ENCODE measurements at regions of chr19 and their contacts with region 1.

Region 1: GRCh38 chr19:39846176-39846677 is at the start of gene FBL:
- DNase-seq: peak; percentile 99
- CTCF ChIP-seq: no peak

Region 2: DNA sequence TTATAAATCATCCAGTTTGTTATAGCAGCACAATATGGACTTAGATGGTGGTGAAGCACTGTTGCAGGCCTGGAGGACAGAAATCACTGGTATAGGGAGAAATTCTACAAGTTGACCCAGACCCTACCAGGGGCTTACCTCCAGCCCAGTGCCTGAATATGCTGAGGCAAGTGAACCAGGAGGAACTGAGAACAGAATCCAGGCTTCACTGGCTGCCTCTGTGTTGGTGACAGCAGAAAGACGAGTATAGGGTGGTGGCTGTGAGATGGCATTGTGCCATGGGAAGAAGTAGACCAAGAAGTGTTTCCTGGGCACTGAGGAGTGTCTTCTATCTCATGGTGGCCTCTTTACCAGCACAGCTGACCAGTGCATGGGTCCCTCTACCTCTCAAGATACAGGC is 290.3 kb before region 1 on chr19:
- CTCF ChIA-PET with region 1: interaction called, 33 read pairs
- POLR2A ChIA-PET with region 1: no interaction called
- DNase-seq: no peak
- CTCF ChIP-seq: no peak

Region 3: DNA sequence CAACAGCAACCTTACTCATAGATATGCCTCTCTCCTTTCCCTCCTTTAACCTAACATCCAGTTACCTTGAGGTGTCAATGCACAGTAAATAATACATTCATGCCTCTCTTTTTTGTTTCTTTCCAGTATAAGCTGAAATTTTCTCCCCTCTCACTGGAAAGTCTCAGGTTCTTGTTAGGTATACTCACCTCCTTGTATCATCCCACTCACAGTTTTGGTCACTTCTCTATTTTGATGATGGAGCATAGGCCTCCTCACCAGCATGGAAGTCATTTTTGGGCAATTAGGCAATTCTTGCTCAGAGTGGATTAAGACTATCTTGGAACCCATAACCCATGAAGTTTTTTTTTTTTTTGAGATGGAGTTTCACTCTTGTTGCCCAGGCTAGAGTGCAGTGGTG is 147.7 kb before region 1 on chr19:
- CTCF ChIA-PET with region 1: interaction called, 15 read pairs
- POLR2A ChIA-PET with region 1: no interaction called
- DNase-seq: no peak
- CTCF ChIP-seq: no peak

Region 4: DNA sequence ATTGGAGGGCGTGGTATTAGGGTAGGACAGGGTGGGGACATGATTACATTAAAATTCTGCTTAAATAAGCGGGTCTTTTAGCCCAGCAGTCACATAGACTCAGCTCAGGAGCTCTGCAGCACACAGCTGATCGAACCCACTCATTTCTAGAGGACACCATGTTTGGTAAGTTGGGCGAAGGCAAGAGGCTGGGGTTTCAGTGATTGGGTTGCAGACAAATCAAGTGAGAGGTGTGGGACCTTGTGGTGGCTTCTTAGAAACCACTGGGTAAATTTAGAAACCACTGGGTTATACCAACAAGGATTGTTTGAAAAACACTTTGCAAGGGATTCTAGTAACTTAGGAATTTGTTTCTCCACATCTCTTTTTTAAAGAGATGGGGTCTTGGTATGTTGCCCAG is 67.5 kb before region 1 on chr19 and contains the start of gene LEUTX:
- CTCF ChIA-PET with region 1: interaction called, 15 read pairs
- POLR2A ChIA-PET with region 1: no interaction called
- DNase-seq: peak; percentile 21
- CTCF ChIP-seq: no peak

Region 5: DNA sequence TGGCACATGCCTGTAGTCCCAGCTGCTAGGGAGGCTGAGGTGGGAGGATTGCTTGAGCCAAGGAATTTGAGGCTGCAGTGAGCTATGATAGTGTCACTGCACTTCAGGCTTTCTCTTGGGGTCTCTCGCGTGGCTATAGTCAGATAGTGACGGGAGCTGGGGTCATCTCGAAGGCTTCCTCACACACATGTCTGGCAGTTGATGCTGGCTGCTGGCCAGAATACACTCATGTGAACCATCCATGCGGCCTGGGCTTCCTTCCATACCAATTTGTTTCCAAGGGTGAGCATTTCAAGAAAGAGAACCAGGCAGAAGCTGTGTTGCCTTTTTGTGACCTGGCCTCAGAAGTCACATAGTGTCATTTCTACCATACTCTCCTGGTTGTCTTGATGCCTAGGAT is 41.1 kb before region 1 on chr19:
- CTCF ChIA-PET with region 1: interaction called, 34 read pairs
- POLR2A ChIA-PET with region 1: no interaction called
- DNase-seq: no peak
- CTCF ChIP-seq: no peak

Region 6: DNA sequence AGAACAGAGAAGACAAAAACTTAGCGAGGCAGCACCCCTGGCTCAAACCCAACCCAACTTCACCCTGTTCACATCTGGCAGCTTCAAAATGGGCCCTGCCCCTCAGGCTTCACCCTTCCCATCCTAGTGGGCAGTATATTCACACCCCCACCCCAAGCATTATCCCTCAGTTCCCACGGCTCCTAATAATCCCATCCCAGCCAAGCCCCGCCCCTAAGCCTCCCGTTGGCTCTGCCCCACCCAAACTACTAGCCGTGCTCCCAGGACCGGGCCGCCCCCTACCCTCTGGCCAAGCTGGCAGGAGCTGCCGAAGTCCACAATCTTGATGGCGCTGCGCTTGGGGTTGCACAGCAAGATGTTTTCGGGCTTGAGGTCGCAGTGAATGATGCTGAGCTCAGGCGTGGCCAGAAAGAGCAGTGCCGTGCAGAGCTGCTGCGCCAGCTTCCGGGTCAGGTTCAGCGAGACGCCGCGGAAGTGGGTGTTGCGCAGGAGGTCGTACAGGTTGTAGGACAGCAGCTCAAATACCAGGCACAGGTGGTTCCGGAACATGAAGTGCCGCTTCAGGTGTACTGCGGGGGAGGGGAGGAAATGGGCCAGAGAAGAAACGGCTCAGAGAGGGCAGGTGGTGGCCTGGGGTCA is 18.1 kb before region 1 on chr19:
- CTCF ChIA-PET with region 1: interaction called, 31 read pairs
- POLR2A ChIA-PET with region 1: interaction called, 11 read pairs
- DNase-seq: no peak
- CTCF ChIP-seq: no peak

Region 7: GRCh38 chr19:39970675-39971379 is 124.6 kb after region 1 on chr19 and contains the start of gene PSMC4:
- CTCF ChIA-PET with region 1: interaction called, 24 read pairs
- POLR2A ChIA-PET with region 1: no interaction called
- DNase-seq: peak; percentile 99
- CTCF ChIP-seq: peak; percentile 93